Common myeloid progenitor, CD34-positive (primary cell): ENCODE measurements at regions of chr6 and their contacts with region 1.

Region 1: DNA sequence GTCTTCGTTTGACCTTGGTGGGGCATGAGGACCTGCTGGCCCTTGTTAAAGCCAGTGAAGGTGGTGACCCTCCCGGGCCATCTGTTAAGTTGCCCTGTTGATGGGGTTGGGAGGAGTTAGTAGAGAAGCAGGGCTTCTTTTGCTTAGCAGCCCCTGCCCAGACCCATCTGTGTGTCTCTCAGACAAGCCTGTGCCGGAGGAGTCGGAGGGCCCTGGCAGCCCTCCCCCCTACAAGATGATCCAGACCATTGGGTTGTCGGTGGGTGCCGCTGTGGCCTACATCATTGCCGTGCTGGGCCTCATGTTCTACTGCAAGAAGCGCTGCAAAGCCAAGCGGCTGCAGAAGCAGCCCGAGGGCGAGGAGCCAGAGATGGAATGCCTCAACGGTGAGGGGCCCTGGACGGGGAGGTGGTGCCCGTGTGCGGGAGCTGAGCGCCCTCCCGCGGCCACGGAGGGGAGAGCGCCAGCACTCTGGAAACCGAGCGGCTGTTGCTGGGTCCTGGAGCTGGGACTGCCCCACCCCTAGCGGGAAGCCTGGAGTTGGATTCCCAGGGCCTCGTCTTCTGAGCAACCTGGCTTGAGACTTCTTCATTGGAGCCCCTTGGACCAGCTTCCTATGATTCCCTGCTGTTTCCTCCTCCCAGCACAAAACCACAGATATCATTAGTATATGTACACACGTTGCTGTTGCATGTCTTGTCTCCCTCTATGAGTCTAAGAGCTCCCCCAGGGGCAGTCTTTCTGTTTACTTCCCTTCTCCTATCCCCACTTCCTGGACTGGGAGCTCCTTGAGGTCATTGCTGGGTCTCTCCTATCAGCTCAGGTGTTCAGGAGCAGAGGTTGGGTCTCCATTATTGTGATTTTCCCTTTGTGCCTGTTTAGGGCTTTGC is 27.6 kb upstream of the SRF start:
- DNase-seq: peak; percentile 64 to 84 (median 79)
- H3K4me3 ChIP-seq: no peak overlapping the region
- H3K27ac ChIP-seq: no peak overlapping the region
- H3K4me1 ChIP-seq: peaks cover 0 to 10% (median 5%) of the 10 kb centered on the region in 4 experiments
- H3K27me3 ChIP-seq: no peaks in the 10 kb centered on the region

Region 2: GRCh38 chr6:42901536-42901957 is 241.9 kb before region 1 on chr6:
- CTCF ChIA-PET with region 1: interaction called, 16 read pairs
- POLR2A ChIA-PET with region 1: no interaction called
- DNase-seq: peak; percentile 80 to 86 (median 82)
- H3K4me3 ChIP-seq: peak overlapping the region in 2 of 7 experiments; percentile 2 to 15
- H3K27ac ChIP-seq: no peak overlapping the region
- H3K4me1 ChIP-seq: peaks cover 0 to 18% (median 11%) of the 10 kb centered on the region in 4 experiments
- H3K27me3 ChIP-seq: no peaks in the 10 kb centered on the region

Region 3: GRCh38 chr6:43013843-43014433 is 129.5 kb before region 1 on chr6 and contains the starts of genes KLHDC3 and MEA1:
- CTCF ChIA-PET with region 1: interaction called, 41 read pairs
- POLR2A ChIA-PET with region 1: no interaction called
- DNase-seq: peak; percentile 100
- H3K4me3 ChIP-seq: peak within 1 kb of the TSS; percentile 74 to 96 (median 90)
- H3K27ac ChIP-seq: peak within 1 kb of the TSS; percentile 52 to 87
- H3K4me1 ChIP-seq: peaks cover 11 to 40% (median 31%) of the 10 kb centered on the region in 4 experiments
- H3K27me3 ChIP-seq: no peaks in the 10 kb centered on the region

Region 4: DNA sequence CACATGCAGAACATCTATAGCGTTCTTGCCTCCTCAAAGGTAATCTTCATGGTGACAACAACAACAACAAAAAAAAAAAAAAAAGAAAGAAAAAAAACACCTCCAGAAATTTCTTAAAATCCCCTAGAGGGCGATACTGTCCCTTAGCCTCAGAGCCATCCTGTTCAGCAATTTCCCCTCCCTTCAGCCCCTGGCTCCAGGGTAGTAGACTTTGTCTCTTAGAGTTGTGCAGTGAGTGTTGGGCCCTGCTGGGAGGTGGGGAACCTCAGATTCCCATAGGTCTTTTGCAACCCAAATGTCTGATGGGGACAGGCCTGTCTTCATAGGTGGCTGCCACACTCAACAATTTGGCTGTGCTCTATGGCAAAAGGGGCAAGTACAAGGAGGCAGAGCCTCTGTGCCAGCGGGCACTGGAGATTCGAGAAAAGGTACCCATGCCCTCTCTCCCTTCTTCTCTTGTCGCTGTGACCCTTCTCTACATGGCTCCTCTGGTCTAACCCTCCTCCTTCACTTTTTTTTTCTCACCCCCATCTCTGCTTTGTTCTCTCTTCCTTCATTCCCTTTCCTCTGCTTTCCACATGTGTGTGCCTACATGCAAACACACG is 73.3 kb before region 1 on chr6:
- CTCF ChIA-PET with region 1: interaction called, 28 read pairs
- POLR2A ChIA-PET with region 1: no interaction called
- DNase-seq: peak; percentile 71 to 88 (median 83)
- H3K4me3 ChIP-seq: no peak overlapping the region
- H3K27ac ChIP-seq: no peak overlapping the region
- H3K4me1 ChIP-seq: peaks cover 0 to under 1% (median 0%) of the 10 kb centered on the region in 4 experiments
- H3K27me3 ChIP-seq: no peaks in the 10 kb centered on the region

Region 5: DNA sequence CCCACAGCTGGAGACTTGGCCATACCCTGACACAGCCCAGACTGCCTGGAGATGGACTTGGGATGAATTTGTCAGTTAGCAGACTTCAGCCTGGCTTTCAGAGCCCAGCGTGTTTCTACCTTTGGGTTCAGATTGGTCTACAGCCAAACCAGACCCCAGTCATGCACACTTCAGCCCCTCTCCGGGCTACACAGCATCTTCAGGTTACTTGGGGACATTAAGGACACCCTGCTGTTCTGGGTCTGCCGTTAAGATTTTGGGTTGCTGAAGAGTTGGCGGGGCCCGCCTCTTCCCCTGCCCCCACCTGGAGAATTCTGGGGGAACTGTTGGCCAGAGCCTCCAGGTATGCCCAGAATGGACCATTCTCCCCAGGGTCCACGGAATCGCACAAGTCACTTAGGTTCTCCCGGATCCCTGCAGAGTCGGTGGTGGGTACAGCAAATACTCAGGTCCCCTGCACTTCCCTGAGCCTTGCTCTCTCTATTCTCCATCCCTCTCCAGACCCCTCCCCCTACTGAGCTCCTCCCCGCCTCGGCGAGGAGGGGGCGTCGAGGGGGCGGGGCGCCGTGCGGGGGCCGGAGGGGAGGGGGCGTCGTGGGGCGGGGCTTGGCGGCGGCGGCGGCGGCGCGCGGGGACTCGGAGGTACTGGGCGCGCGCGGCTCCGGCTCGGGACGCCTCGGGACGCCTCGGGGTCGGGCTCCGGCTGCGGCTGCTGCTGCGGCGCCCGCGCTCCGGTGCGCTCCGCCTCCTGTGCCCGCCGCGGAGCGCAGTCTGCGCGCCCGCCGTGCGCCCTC is 67.6 kb before region 1 on chr6 and contains the start of gene PTK7:
- CTCF ChIA-PET with region 1: interaction called, 28 read pairs
- POLR2A ChIA-PET with region 1: no interaction called
- DNase-seq: peak; percentile 59 to 82 (median 75)
- H3K4me3 ChIP-seq: peak within 1 kb of the TSS; percentile 81 to 94 (median 90)
- H3K27ac ChIP-seq: peak within 1 kb of the TSS in 1 of 2 experiments; percentile 71
- H3K4me1 ChIP-seq: peaks cover 0 to 25% (median 20%) of the 10 kb centered on the region in 4 experiments
- H3K27me3 ChIP-seq: no peaks in the 10 kb centered on the region

Region 6: DNA sequence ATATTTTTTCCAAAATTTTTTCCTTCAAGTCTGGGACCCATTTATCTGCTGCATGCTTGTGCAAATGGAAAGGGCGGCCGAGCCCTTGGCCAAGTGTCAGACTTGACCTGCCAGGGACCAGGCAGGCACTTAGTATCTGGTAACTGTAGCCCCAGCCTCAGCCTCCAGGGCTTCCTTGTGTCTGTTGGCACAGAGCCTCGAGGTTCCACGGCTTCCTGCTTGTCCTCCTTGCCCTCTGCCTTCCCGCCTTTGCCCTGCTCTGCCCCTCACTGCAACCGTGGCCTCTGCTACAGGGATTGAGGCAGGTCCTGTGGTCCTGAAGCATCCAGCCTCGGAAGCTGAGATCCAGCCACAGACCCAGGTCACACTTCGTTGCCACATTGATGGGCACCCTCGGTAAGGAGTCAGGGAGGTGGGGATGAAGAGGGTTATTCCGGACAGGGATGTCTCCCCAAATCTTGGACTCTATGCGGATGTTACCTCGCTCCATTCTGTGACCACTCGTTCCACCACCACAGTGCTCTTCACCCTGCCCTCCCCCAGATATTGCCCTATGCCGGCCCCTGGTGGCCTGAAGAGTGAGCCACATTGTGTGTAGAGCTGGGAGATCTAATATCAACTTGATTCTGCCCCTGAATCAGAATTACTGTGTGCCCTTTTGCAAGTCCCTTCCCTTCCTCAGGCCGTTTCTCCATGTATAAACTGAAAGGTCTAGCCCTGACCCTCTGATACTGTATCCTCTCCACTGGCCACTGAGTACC is 13.9 kb before region 1 on chr6:
- CTCF ChIA-PET with region 1: interaction called, 19 read pairs
- POLR2A ChIA-PET with region 1: no interaction called
- DNase-seq: peak in 2 of 3 donors; percentile 55 to 58
- H3K4me3 ChIP-seq: no peak overlapping the region
- H3K27ac ChIP-seq: no peak overlapping the region
- H3K4me1 ChIP-seq: peaks cover 0 to 5% (median 0%) of the 10 kb centered on the region in 4 experiments
- H3K27me3 ChIP-seq: no peaks in the 10 kb centered on the region